ENCODE measurements at regions of chr11 and their contacts with region 1.

Region 1: GRCh38 chr11:47454180-47454644 is 5.3 kb upstream of the RAPSN start:
- DNase-seq: peak; percentile 65
- ATAC-seq: peak; percentile 90

Region 2: GRCh38 chr11:47305734-47306483 is 148.3 kb before region 1 on chr11:
- intact Hi-C with region 1: no loop called
- DNase-seq: peak; percentile 84
- ATAC-seq: peak; percentile 97

Region 3: GRCh38 chr11:47361419-47361818 is 92.8 kb before region 1 on chr11:
- intact Hi-C with region 1: no loop called
- DNase-seq: no peak
- ATAC-seq: peak; percentile 7

Region 4: GRCh38 chr11:47373876-47374720 is 80.1 kb before region 1 on chr11:
- intact Hi-C with region 1: loop called (anchors 10 kb)
- DNase-seq: peak; percentile 94
- ATAC-seq: peak; percentile 82

Measured in left ventricle myocardium superior (tissue), 1 donor.